ENCODE measurements at regions of chr1 and their contacts with region 1.

Region 1: DNA sequence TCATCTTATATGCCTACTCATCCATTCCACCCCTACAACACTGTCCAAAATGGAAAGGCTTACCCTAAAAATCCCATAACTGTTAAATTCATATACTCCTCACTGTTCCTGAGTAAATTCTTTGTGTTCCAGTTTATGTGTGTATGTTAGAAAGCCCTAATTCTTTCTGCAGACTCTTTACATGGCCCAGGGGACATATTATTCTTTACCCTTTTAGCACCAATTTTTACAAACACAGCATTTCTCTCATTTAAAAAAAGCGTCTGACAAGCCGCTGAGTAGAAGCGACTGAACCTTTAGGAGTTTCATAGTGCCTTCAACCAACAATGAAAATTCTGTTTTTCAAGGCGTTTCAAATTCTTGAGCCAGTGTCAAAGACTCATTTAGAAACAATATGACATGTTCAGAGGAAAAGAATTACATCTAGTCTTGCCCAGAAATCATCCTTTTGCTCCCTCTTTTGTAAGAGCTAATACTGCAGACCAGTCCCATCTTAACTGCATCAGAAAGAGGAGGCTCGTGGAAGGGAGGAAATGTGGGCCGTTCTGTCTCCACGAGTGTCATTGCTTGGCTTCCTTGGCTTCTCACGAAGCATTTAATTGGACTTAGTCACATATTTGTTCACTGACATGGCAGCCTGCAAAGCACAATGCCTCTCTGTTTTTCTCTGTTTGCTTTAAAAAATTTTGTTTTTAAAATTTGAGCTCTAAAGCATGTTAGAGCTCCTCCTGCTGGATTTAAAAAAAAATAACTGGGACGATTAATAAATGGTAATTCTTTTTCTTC is 21.3 kb upstream of the C1orf105 start:
- DNase-seq: peak in 7 of 14 experiments; percentile 2 to 65 (median 60)
- ATAC-seq: peak; percentile 54
- H3K4me3 ChIP-seq: peak overlapping the region; percentile 10
- H3K4me3 Mint-ChIP-seq: peak overlapping the region; percentile 67
- H3K27ac ChIP-seq: no peak overlapping the region
- H3K27ac Mint-ChIP-seq: peak overlapping the region; percentile 81
- H3K4me1 ChIP-seq: peaks cover 18% of the 10 kb centered on the region
- H3K4me1 Mint-ChIP-seq: peaks cover 74% of the 10 kb centered on the region
- H3K27me3 ChIP-seq: no peaks in the 10 kb centered on the region
- H3K27me3 Mint-ChIP-seq: no peaks in the 10 kb centered on the region
- CTCF ChIP-seq: peak; percentile 87

Region 2: DNA sequence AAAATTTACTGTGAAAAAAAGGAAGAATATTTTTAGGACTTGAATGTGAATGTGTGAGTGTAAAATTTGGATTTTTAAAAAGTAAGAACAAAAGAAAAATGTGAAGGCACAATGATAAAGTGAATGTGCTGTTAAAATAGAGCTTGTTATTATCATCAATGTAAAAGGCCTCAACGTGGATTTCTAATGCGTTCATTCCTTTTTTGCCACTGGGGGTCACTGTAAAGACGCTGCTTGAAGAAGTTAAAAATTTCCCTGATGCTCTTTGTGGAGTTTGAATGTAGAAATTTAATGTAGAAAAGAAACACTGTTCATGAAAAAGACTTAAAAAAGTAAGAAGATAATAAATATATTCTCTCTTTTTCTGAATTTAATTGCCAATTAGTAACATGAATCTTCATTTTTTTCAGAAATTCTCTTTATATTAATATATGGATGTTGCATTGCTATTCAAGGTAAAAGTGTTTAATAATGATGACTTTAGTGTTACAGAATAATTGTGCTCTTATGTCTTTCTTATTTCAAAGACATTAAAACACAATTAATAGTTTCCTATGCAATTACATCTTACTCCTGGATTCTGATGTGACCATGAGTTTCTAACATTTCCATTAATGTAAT is 396.3 kb before region 1 on chr1:
- CTCF ChIA-PET with region 1: interaction called, 8 read pairs
- POLR2A ChIA-PET with region 1: interaction called, 5 read pairs
- intact Hi-C with region 1: loop called (anchors 1 kb)
- DNase-seq: peak in 8 of 14 experiments; percentile 3 to 65 (median 34)
- ATAC-seq: no peak
- H3K4me3 ChIP-seq: no peak overlapping the region
- H3K4me3 Mint-ChIP-seq: no peak overlapping the region
- H3K27ac ChIP-seq: no peak overlapping the region
- H3K27ac Mint-ChIP-seq: no peak overlapping the region
- H3K4me1 ChIP-seq: no peaks in the 10 kb centered on the region
- H3K4me1 Mint-ChIP-seq: no peaks in the 10 kb centered on the region
- H3K27me3 ChIP-seq: no peaks in the 10 kb centered on the region
- H3K27me3 Mint-ChIP-seq: peaks cover under 1% of the 10 kb centered on the region
- CTCF ChIP-seq: peak; percentile 71

Region 3: GRCh38 chr1:172135076-172135672 is 264.0 kb before region 1 on chr1:
- CTCF ChIA-PET with region 1: interaction called, 3 read pairs
- POLR2A ChIA-PET with region 1: interaction called, 3 read pairs
- intact Hi-C with region 1: loop called (anchors 1 kb)
- DNase-seq: peak in 7 of 14 experiments; percentile 3 to 65 (median 41)
- ATAC-seq: peak; percentile 49
- H3K4me3 ChIP-seq: no peak overlapping the region
- H3K4me3 Mint-ChIP-seq: no peak overlapping the region
- H3K27ac ChIP-seq: no peak overlapping the region
- H3K27ac Mint-ChIP-seq: no peak overlapping the region
- H3K4me1 ChIP-seq: no peaks in the 10 kb centered on the region
- H3K4me1 Mint-ChIP-seq: no peaks in the 10 kb centered on the region
- H3K27me3 ChIP-seq: no peaks in the 10 kb centered on the region
- H3K27me3 Mint-ChIP-seq: no peaks in the 10 kb centered on the region
- CTCF ChIP-seq: peak; percentile 66

Region 4: GRCh38 chr1:172326136-172326535 is 73.0 kb before region 1 on chr1:
- CTCF ChIA-PET with region 1: no interaction called
- POLR2A ChIA-PET with region 1: no interaction called
- intact Hi-C with region 1: no loop called
- DNase-seq: no peak
- ATAC-seq: no peak
- H3K4me3 ChIP-seq: no peak overlapping the region
- H3K4me3 Mint-ChIP-seq: no peak overlapping the region
- H3K27ac ChIP-seq: no peak overlapping the region
- H3K27ac Mint-ChIP-seq: no peak overlapping the region
- H3K4me1 ChIP-seq: no peaks in the 10 kb centered on the region
- H3K4me1 Mint-ChIP-seq: no peaks in the 10 kb centered on the region
- H3K27me3 ChIP-seq: no peaks in the 10 kb centered on the region
- H3K27me3 Mint-ChIP-seq: no peaks in the 10 kb centered on the region
- CTCF ChIP-seq: no peak

Region 5: DNA sequence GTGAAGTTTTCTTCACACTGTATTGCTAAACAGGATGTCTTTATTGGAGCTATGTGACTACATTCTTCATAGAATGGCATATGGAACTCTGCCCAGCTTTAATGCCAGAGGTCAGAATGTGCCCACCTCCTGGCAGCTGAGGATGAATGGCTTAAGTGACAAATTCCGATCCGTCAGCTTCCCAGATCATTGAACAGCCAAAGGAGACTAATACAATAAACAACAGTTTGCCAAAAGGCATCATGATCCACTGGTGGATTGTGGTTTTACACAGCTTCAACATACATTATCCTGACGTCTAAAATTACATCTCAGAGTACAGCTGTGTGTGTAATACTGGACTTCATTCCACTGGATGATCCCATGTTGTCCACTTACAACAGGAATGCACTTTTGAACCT is 47.4 kb before region 1 on chr1:
- CTCF ChIA-PET with region 1: no interaction called
- POLR2A ChIA-PET with region 1: interaction called, 5 read pairs
- intact Hi-C with region 1: loop called in 1 of 2 experiments (anchors 2 kb)
- DNase-seq: no peak
- ATAC-seq: no peak
- H3K4me3 ChIP-seq: no peak overlapping the region
- H3K4me3 Mint-ChIP-seq: no peak overlapping the region
- H3K27ac ChIP-seq: no peak overlapping the region
- H3K27ac Mint-ChIP-seq: no peak overlapping the region
- H3K4me1 ChIP-seq: peaks cover 5% of the 10 kb centered on the region
- H3K4me1 Mint-ChIP-seq: peaks cover 25% of the 10 kb centered on the region
- H3K27me3 ChIP-seq: no peaks in the 10 kb centered on the region
- H3K27me3 Mint-ChIP-seq: no peaks in the 10 kb centered on the region
- CTCF ChIP-seq: no peak

Region 6: GRCh38 chr1:172380441-172381244 is 18.5 kb before region 1 on chr1:
- CTCF ChIA-PET with region 1: interaction called, 4 read pairs
- POLR2A ChIA-PET with region 1: interaction called, 35 read pairs
- intact Hi-C with region 1: loop called in 1 of 2 experiments (anchors 1 kb)
- DNase-seq: peak in 8 of 14 experiments; percentile 9 to 84 (median 38)
- ATAC-seq: peak; percentile 96
- H3K4me3 ChIP-seq: peak overlapping the region; percentile 19
- H3K4me3 Mint-ChIP-seq: peak overlapping the region; percentile 65
- H3K27ac ChIP-seq: peak overlapping the region; percentile 62 to 77
- H3K27ac Mint-ChIP-seq: peak overlapping the region; percentile 88
- H3K4me1 ChIP-seq: no peaks in the 10 kb centered on the region
- H3K4me1 Mint-ChIP-seq: peaks cover 59% of the 10 kb centered on the region
- H3K27me3 ChIP-seq: no peaks in the 10 kb centered on the region
- H3K27me3 Mint-ChIP-seq: no peaks in the 10 kb centered on the region
- CTCF ChIP-seq: no peak

Region 7: DNA sequence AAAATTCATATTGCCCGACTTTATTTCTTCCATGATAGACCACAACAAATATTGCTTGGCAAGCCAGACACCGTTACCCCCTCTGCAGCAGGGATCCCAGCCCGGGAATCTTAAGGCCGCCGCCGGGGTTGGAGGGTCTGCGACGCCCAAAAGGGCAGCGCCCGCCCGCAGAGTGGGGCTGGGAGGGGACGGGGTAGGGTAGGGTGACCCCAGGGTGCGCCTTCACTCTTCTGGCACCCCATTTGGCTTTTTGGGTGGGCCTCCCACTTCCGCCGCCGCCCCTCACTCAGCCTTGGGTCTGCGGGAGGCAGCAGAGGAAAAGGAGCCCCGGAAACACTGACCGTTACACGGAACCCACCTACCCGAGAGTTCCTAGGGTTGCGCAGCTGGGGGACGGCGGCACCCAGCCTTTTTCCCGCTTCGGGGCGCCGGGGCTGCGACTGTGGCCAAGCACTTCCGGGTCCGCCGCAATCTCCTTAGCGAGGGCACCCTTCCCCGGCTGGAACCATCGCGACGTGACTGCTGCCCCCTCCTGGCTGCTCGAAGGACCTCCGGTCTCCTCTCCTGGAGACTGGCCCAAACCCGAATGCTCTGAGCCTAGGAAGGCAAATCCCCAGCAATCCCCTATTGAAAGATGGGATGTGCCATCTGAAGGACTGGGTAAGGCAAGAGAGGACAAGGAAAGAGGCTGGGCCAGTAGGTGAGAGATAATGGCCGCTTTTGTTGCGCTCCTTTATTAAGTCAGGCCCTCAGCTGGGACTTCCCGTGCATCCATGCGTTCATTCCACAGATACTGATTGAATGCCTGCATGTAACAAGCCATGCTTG is 44.7 kb after region 1 on chr1 and contains the start of gene PIGC:
- CTCF ChIA-PET with region 1: interaction called, 5 read pairs
- POLR2A ChIA-PET with region 1: interaction called, 7 read pairs
- intact Hi-C with region 1: loop called in 1 of 2 experiments (anchors 2 kb)
- DNase-seq: peak; percentile 86 to 95 (median 92)
- ATAC-seq: peak; percentile 99
- H3K4me3 ChIP-seq: peak within 1 kb of the TSS; percentile 92
- H3K4me3 Mint-ChIP-seq: peak within 1 kb of the TSS; percentile 98
- H3K27ac ChIP-seq: peak within 1 kb of the TSS; percentile 69 to 79
- H3K27ac Mint-ChIP-seq: peak within 1 kb of the TSS; percentile 90
- H3K4me1 ChIP-seq: peaks cover 17% of the 10 kb centered on the region
- H3K4me1 Mint-ChIP-seq: peaks cover 39% of the 10 kb centered on the region
- H3K27me3 ChIP-seq: no peaks in the 10 kb centered on the region
- H3K27me3 Mint-ChIP-seq: no peaks in the 10 kb centered on the region
- CTCF ChIP-seq: peak; percentile 86
- total RNA-seq, gene PIGC: 23.7 to 27.1 TPM

Region 8: DNA sequence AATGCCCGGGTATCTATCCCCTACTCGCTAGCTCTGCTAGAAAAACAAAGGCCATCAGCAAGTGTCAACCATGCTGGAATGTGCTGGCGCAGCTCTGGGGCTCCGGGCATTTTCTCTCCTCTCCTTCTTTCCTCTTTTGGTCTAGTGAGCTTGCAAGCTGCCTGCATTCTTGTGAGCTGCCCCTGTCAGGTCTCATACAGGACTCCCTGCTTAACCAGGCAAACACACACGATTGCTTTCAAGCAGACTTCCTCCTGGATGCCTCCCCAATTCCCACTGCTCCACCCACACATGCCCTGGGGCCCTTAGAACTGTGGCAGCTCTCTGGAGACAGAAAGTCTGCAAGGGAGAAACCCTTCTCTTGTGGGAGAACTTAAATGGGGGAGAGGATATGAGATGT is 98.1 kb after region 1 on chr1:
- CTCF ChIA-PET with region 1: no interaction called
- POLR2A ChIA-PET with region 1: no interaction called
- intact Hi-C with region 1: no loop called
- DNase-seq: no peak
- ATAC-seq: no peak
- H3K4me3 ChIP-seq: no peak overlapping the region
- H3K4me3 Mint-ChIP-seq: no peak overlapping the region
- H3K27ac ChIP-seq: no peak overlapping the region
- H3K27ac Mint-ChIP-seq: no peak overlapping the region
- H3K4me1 ChIP-seq: no peaks in the 10 kb centered on the region
- H3K4me1 Mint-ChIP-seq: no peaks in the 10 kb centered on the region
- H3K27me3 ChIP-seq: no peaks in the 10 kb centered on the region
- H3K27me3 Mint-ChIP-seq: no peaks in the 10 kb centered on the region
- CTCF ChIP-seq: no peak

Region 9: DNA sequence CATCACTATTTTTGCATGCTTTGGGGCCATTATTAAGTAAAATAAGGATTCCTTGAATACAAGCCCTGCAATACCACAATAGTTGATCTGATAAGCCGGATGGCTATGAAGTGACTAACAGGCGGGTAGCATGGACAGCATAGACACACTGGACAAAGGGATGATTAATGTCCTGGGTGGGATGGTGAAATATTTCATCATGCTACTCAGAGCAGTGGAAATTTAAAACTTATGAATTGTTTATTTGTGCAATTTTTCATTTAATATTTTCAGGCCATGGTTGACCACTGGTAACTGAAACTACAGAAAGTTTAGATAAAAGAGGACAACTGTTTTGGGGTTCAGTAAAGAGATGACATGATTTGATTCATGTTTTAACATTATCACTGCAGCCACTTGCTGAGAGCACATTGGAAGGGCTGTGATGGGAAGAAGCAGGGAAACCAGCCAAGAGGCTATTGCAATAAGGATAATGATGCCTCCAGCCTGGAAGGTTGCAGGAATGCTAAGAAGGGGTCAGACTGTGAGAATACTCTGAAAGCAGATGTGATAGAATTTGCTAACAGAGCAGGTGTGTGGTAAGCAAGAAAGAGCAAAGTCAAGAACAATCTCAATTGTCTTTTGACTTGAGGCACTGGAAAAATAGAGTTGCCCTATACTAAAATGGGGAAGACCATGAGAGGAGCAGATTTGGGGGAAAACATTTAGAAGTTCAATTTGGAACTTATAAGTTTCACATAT is 870.5 kb after region 1 on chr1:
- CTCF ChIA-PET with region 1: no interaction called
- POLR2A ChIA-PET with region 1: no interaction called
- intact Hi-C with region 1: no loop called
- DNase-seq: no peak
- ATAC-seq: no peak
- H3K4me3 ChIP-seq: no peak overlapping the region
- H3K4me3 Mint-ChIP-seq: no peak overlapping the region
- H3K27ac ChIP-seq: no peak overlapping the region
- H3K27ac Mint-ChIP-seq: no peak overlapping the region
- H3K4me1 ChIP-seq: no peaks in the 10 kb centered on the region
- H3K4me1 Mint-ChIP-seq: peaks cover 3% of the 10 kb centered on the region
- H3K27me3 ChIP-seq: no peaks in the 10 kb centered on the region
- H3K27me3 Mint-ChIP-seq: no peaks in the 10 kb centered on the region
- CTCF ChIP-seq: no peak

Measured in CD4-positive, alpha-beta T cell (primary cell).